Head of caudate nucleus (tissue), 42 donors: ENCODE measurements at regions of chr6 and their contacts with region 1.

Region 1: DNA sequence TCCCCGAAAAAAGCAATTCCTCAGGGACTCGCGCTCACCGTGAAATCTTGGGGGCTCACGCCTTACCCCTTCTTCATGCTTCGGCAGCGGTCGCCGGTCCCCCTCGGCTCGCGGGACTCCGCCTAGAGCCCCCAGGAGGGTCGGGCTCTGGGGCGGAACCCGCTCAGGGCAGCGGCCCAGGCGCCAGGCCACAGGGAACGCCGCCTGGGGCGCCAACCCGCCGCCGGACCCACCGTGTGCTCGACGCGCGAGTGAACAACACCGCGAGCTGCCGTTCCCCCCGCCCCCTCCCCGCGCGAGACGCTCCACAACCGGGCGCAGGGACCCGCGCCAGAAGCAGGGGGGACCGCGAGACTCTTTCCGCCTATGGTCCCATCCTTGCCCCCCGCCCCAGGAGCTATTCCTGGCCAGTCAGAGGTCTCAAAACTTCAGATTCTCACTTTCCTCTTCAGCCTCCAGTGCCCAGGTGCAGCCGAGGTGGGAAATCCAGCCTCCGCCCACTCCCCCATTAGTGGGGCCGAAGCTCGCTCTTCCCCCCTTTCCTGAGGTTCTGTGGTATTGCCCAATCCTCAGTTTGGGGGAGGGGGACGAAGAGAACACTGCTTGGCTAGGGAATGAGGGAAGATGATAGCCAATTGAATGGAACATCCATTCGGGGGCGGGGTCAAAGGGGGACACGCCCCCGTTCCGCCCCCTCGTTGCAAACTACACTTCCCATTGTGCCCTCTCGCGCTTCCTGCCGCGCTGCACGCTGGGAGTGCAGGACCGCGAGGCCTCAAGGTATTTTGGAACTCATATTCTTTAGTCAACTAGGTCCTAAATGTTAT is at the start of gene WASF1:
- DNase-seq: peak; percentile 92 to 98 (median 96)

Region 2: DNA sequence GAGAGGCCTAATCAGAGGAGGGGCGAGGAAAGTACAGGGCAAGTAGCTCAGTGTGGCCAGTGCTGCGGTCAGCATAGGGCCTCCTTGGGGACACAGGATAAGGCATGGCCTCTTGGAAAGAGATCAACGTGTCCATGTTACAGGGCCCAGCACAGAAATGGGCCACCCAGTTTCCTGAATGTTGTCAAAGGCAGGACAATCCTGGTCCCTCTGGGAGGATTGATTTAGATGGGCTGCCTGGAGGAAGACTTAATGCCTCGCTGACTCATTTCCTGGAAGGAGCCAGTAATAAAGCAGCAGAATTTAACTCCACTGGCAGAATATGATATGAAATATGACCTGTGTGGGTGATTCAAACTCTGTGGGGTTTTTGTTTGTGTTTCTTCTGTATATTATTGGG is 219.2 kb after region 1 on chr6:
- intact Hi-C with region 1: loop called (anchors 10 kb)
- DNase-seq: no peak